Activated naive CD4-positive, alpha-beta T cell treated with anti-CD3 and anti-CD28 coated beads for 36 hours (primary cell): ENCODE measurements at regions of chrX and their contacts with region 1.

Region 1: DNA sequence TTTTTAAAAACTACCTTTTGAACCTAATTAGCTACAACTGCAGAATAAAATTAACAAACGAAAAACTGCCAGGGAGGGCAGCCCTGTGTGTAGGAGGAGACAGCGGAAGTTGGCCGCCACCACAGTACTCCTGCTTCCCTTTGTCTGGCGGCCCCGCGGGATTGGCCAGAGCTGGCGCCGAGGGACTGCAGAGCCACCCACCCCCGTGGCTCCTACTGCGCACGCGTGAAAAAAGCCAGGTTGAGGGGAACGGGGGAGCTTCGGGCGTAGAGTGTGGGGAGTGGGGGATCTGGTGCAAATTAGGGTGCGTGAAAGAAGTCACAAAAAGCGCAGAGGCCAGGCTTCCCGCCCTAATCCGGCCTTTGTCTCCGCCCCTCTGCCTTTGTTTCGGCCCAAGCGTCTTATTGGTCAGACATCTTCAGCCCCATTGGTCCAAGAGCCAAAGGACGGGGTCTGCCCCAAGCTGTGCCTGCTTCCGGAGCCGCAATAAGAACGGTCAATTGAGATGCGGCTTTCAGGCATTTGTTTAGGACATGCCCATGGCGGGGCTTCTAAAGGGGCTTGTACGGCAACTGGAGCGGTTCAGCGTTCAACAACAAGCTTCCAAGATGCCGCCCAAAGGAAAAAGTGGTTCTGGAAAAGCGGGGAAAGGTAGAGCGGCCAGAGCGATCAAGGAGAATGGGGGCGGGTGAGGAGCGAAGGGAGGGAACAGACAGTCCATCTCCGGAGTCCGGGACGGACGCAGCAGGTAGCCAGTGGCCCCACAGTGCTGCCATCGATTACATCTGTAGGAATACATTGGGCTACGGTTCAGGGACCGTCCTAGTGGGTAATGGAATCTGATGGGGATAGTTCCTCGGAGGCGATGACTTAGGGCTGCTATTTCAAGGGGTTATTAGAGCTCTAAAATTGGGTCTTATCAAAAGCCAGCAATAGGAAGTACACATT is at the start of gene PIN4:
- DNase-seq: peak; percentile 91
- H3K4me3 Mint-ChIP-seq: no peak within 1 kb of the TSS
- H3K27ac Mint-ChIP-seq: no peak within 1 kb of the TSS
- H3K4me1 Mint-ChIP-seq: peaks cover 11% of the 10 kb centered on the region
- H3K27me3 Mint-ChIP-seq: no peaks in the 10 kb centered on the region
- total RNA-seq, gene PIN4: 5.6 to 8.0 TPM

Region 2: DNA sequence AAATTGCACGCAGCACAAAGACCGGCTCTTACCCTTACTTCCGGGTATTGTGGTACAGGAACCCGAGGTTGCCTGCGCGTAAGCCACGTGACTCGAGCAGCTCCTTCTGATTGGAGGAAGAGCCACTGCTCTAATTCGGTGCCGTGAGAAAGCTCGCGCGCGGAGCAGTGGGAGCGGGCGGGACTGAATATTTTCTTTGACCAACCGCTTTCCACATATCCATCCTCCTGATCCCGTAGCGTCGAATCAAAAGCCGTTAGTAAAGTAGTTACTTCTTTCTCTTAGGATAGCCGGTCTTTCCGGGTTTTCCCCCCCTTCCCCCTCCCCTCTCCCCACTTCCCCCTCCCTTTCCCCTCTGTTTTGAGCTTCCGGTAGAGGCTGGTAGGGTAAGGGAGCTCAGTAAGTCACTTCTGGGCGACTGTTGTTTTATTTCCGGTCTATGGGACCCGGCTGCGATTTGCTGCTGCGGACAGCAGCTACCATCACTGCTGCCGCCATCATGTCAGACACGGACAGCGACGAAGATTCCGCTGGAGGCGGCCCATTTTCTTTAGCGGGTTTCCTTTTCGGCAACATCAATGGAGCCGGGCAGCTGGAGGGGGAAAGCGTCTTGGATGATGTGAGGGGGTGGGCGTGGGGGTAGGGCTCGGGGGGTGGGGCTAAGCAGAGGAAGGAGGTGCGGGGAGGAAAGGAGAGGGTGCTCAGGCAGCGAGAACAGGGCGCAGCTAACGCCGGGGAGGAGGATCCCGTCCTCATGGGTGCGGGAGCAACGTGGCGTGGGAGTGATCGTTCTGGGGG is 815.4 kb before region 1 on chrX and contains the start of gene TAF1:
- CTCF ChIA-PET with region 1: no interaction called
- intact Hi-C with region 1: loop called (anchors 5 kb)
- DNase-seq: peak; percentile 96
- H3K4me3 Mint-ChIP-seq: peak within 1 kb of the TSS; percentile 98
- H3K27ac Mint-ChIP-seq: peak within 1 kb of the TSS; percentile 99
- H3K4me1 Mint-ChIP-seq: peaks cover 25% of the 10 kb centered on the region
- H3K27me3 Mint-ChIP-seq: no peaks in the 10 kb centered on the region
- total RNA-seq, gene TAF1: 24.0 to 27.2 TPM

Region 3: GRCh38 chrX:72126539-72127140 is 54.8 kb before region 1 on chrX:
- CTCF ChIA-PET with region 1: no interaction called
- intact Hi-C with region 1: loop called (anchors 5 kb)
- DNase-seq: peak; percentile 90
- H3K4me3 Mint-ChIP-seq: no peak overlapping the region
- H3K27ac Mint-ChIP-seq: peak overlapping the region; percentile 36
- H3K4me1 Mint-ChIP-seq: peaks cover 4% of the 10 kb centered on the region
- H3K27me3 Mint-ChIP-seq: peaks cover 19% of the 10 kb centered on the region

Region 4: GRCh38 chrX:72169008-72169728 is 12.3 kb before region 1 on chrX:
- CTCF ChIA-PET with region 1: no interaction called
- intact Hi-C with region 1: loop called (anchors 1 kb)
- DNase-seq: peak; percentile 30
- H3K4me3 Mint-ChIP-seq: peak overlapping the region; percentile 65
- H3K27ac Mint-ChIP-seq: peak overlapping the region; percentile 79
- H3K4me1 Mint-ChIP-seq: peaks cover 3% of the 10 kb centered on the region
- H3K27me3 Mint-ChIP-seq: no peaks in the 10 kb centered on the region

Region 5: GRCh38 chrX:72276478-72276953 is 95.1 kb after region 1 on chrX:
- CTCF ChIA-PET with region 1: interaction called, 4 read pairs
- intact Hi-C with region 1: loop called (anchors 1 kb)
- DNase-seq: no peak
- H3K4me3 Mint-ChIP-seq: peak overlapping the region; percentile 80
- H3K27ac Mint-ChIP-seq: peak overlapping the region; percentile 89
- H3K4me1 Mint-ChIP-seq: peaks cover 37% of the 10 kb centered on the region
- H3K27me3 Mint-ChIP-seq: no peaks in the 10 kb centered on the region